ENCODE measurements at regions of chr11 and their contacts with region 1.

Region 1: GRCh38 chr11:57335343-57336110 is at the start of gene SSRP1:
- DNase-seq: peak; percentile 91
- ATAC-seq: peak; percentile 96
- H3K4me3 ChIP-seq: peak within 1 kb of the TSS; percentile 61 to 87 (median 83)
- H3K4me3 Mint-ChIP-seq: peak within 1 kb of the TSS; percentile 97
- H3K27ac ChIP-seq: peak within 1 kb of the TSS; percentile 74 to 87
- H3K27ac Mint-ChIP-seq: peak within 1 kb of the TSS; percentile 99
- H3K4me1 ChIP-seq: peaks cover 17 to 23% of the 10 kb centered on the region in 2 donors
- H3K4me1 Mint-ChIP-seq: peaks cover 27% of the 10 kb centered on the region
- H3K27me3 ChIP-seq: no peaks in the 10 kb centered on the region
- H3K27me3 Mint-ChIP-seq: peaks cover 5% of the 10 kb centered on the region
- CTCF ChIP-seq: no peak
- total RNA-seq, gene SSRP1: 63.8 and 66.6 TPM in 2 replicates

Region 2: GRCh38 chr11:57100638-57101331 is 234.7 kb before region 1 on chr11:
- CTCF ChIA-PET with region 1: no interaction called
- POLR2A ChIA-PET with region 1: interaction called, 10 read pairs
- intact Hi-C with region 1: no loop called
- DNase-seq: no peak
- ATAC-seq: no peak
- H3K4me3 ChIP-seq: no peak overlapping the region
- H3K4me3 Mint-ChIP-seq: no peak overlapping the region
- H3K27ac ChIP-seq: no peak overlapping the region
- H3K27ac Mint-ChIP-seq: no peak overlapping the region
- H3K4me1 ChIP-seq: no peaks in the 10 kb centered on the region
- H3K4me1 Mint-ChIP-seq: no peaks in the 10 kb centered on the region
- H3K27me3 ChIP-seq: no peaks in the 10 kb centered on the region
- H3K27me3 Mint-ChIP-seq: peaks cover 4% of the 10 kb centered on the region
- CTCF ChIP-seq: no peak

Region 3: DNA sequence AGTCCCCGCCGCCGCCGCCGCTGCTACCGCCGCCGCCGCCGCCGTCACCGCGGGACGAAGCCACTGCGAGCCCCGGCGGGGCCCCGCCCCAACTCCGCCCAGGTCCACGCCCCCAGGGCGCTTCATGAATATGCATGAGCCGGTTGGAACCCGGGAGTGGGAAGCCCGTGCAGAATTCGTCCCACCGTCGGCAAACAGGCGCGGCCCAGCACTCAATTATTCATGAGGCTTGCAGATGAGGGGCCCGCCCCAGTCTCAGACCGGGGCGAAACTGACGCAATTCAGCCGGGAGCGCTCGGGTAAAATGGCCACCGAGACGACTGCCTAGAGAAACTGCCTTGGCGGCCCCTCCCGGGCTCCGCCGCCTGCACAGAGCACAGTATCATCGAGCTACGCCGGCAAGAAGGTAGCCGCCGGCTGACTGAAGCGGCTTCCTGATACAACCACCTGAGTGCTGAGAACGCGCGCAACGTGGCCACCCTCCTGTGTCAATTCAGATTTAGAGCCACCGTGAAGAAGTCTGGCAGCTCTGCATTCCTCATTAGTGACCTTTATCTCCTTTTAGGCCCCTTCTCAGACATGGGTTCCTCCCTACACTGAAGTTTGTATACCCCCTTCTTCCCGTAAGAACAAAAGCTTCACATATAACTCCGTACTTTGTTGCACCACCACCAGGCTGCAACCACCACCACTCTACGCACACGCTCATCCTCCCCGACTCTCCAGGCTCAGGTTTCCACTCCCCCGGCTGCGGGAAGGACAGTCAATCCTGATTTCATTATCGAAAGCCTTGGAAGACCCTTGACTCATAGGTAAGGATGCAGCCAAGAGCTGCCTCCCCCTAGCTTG is 10.4 kb before region 1 on chr11 and contains the start of gene TNKS1BP1:
- CTCF ChIA-PET with region 1: interaction called, 24 read pairs
- POLR2A ChIA-PET with region 1: interaction called, 41 read pairs
- intact Hi-C with region 1: loop called (anchors 1 kb)
- DNase-seq: peak; percentile 93
- ATAC-seq: peak; percentile 88
- H3K4me3 ChIP-seq: peak within 1 kb of the TSS; percentile 43 to 83 (median 75)
- H3K4me3 Mint-ChIP-seq: peak within 1 kb of the TSS; percentile 95
- H3K27ac ChIP-seq: peak within 1 kb of the TSS; percentile 78 to 79
- H3K27ac Mint-ChIP-seq: peak within 1 kb of the TSS; percentile 94
- H3K4me1 ChIP-seq: peaks cover 13 to 20% of the 10 kb centered on the region in 2 donors
- H3K4me1 Mint-ChIP-seq: peaks cover 28% of the 10 kb centered on the region
- H3K27me3 ChIP-seq: no peaks in the 10 kb centered on the region
- H3K27me3 Mint-ChIP-seq: no peaks in the 10 kb centered on the region
- CTCF ChIP-seq: no peak
- total RNA-seq, gene TNKS1BP1: 8.1 and 12.2 TPM in 2 replicates

Region 4: DNA sequence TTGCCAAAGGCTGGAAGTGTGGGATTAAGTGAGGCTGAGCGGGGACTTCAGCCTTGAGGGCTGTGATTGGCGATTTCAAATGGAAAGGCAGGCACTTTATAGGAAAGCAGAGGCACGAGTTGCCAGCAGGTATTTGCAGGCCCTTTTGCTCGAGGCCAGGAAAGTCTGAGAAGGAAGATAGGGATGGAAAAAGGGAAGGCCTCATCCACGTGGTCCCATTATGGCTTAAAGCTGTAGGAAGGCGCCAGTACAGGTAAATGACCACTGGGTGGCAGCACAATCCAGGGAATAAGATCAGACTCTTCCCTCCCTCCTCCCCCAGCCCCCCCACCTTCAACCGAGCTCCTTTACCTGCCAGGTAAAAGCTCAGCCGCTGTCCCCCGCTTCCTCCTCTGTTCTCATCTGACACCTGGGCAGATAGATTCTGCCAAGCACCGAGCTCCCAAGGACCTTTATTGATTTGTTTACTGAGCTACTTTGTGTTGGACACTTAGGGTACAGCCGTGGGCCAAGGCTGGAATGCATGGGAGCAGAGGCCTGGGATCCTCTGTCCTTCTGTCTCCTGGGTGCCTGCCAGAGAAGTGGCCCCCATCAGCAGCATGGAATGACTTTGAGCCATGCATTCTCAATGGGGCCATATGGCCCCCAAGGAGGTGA is 10.2 kb after region 1 on chr11:
- CTCF ChIA-PET with region 1: interaction called, 17 read pairs
- POLR2A ChIA-PET with region 1: no interaction called
- intact Hi-C with region 1: loop called (anchors 1 kb)
- DNase-seq: peak; percentile 78
- ATAC-seq: peak; percentile 82
- H3K4me3 ChIP-seq: no peak overlapping the region
- H3K4me3 Mint-ChIP-seq: no peak overlapping the region
- H3K27ac ChIP-seq: no peak overlapping the region
- H3K27ac Mint-ChIP-seq: no peak overlapping the region
- H3K4me1 ChIP-seq: peaks cover 0 to 6% of the 10 kb centered on the region in 2 donors
- H3K4me1 Mint-ChIP-seq: peaks cover 6% of the 10 kb centered on the region
- H3K27me3 ChIP-seq: no peaks in the 10 kb centered on the region
- H3K27me3 Mint-ChIP-seq: peaks cover 8% of the 10 kb centered on the region
- CTCF ChIP-seq: peak; percentile 82

Region 5: GRCh38 chr11:57368106-57368844 is 32.7 kb after region 1 on chr11:
- CTCF ChIA-PET with region 1: no interaction called
- POLR2A ChIA-PET with region 1: no interaction called
- intact Hi-C with region 1: no loop called
- DNase-seq: no peak
- ATAC-seq: no peak
- H3K4me3 ChIP-seq: no peak overlapping the region
- H3K4me3 Mint-ChIP-seq: no peak overlapping the region
- H3K27ac ChIP-seq: no peak overlapping the region
- H3K27ac Mint-ChIP-seq: no peak overlapping the region
- H3K4me1 ChIP-seq: no peaks in the 10 kb centered on the region
- H3K4me1 Mint-ChIP-seq: no peaks in the 10 kb centered on the region
- H3K27me3 ChIP-seq: peaks cover 0 to 2% (median under 1%) of the 10 kb centered on the region in 4 experiments
- H3K27me3 Mint-ChIP-seq: peaks cover 14% of the 10 kb centered on the region
- CTCF ChIP-seq: no peak

Region 6: DNA sequence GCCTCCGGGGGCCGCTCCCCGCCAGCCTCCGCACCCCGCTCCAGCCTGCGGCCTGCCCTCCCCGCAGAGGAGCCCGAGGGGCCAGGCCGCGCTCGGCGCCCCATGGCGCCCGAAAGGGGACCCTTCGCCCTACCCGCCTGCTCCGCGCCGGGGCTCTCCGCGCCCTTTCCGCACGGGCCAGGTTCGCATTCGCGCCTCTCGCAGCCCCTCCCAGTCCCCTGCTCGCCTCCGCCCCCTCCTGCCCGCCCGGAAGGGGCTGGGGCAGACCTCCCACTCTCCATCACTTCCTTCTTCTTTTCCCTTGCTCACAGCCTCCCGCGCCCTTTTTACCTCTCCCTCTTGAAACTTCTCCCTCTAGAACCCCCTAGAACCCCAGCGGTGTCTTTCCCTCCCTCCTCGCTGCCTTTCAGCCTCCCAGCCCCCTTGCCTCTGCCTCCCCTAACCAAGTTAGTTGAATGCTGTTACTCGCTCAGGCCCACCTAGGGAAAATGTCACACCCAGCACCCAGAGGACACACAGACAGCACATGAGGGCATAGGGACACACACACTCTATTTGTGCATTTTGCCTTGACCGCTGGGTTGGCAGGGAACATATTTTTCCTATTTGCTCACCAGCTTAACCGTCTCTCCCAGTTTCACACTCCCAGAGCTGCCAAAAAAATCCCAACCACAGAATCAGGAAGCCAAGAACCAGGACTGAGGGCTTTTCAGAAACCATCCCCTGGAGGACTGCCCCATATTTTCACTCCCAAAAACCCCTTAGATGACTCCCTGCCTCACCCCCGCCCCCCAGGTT is 91.6 kb after region 1 on chr11 and contains the start of gene SLC43A3:
- CTCF ChIA-PET with region 1: no interaction called
- POLR2A ChIA-PET with region 1: no interaction called
- intact Hi-C with region 1: loop called (anchors 5 kb)
- DNase-seq: peak; percentile 78
- ATAC-seq: peak; percentile 88
- H3K4me3 ChIP-seq: peak within 1 kb of the TSS; percentile 32 to 90 (median 66)
- H3K4me3 Mint-ChIP-seq: peak within 1 kb of the TSS; percentile 91
- H3K27ac ChIP-seq: peak within 1 kb of the TSS; percentile 29 to 68
- H3K27ac Mint-ChIP-seq: peak within 1 kb of the TSS; percentile 92
- H3K4me1 ChIP-seq: peaks cover 28 to 33% of the 10 kb centered on the region in 2 donors
- H3K4me1 Mint-ChIP-seq: peaks cover 36% of the 10 kb centered on the region
- H3K27me3 ChIP-seq: no peaks in the 10 kb centered on the region
- H3K27me3 Mint-ChIP-seq: no peaks in the 10 kb centered on the region
- CTCF ChIP-seq: no peak
- total RNA-seq, gene SLC43A3: 19.3 and 20.9 TPM in 2 replicates

Region 7: GRCh38 chr11:57712256-57713150 is 377.0 kb after region 1 on chr11 and contains the start of gene TMX2:
- CTCF ChIA-PET with region 1: no interaction called
- POLR2A ChIA-PET with region 1: no interaction called
- intact Hi-C with region 1: loop called (anchors 2 kb)
- DNase-seq: peak; percentile 96
- ATAC-seq: peak; percentile 86
- H3K4me3 ChIP-seq: peak within 1 kb of the TSS; percentile 78 to 100 (median 93)
- H3K4me3 Mint-ChIP-seq: peak within 1 kb of the TSS; percentile 99
- H3K27ac ChIP-seq: peak within 1 kb of the TSS; percentile 70 to 96
- H3K27ac Mint-ChIP-seq: peak within 1 kb of the TSS; percentile 94
- H3K4me1 ChIP-seq: peaks cover 21 to 28% of the 10 kb centered on the region in 2 donors
- H3K4me1 Mint-ChIP-seq: peaks cover 42% of the 10 kb centered on the region
- H3K27me3 ChIP-seq: no peaks in the 10 kb centered on the region
- H3K27me3 Mint-ChIP-seq: no peaks in the 10 kb centered on the region
- CTCF ChIP-seq: no peak
- total RNA-seq, gene TMX2: 58.8 and 60.2 TPM in 2 replicates

Measured in B cell (primary cell).